Activated CD8-positive, alpha-beta T cell treated with anti-CD3 and anti-CD28 coated beads for 36 hours (primary cell): ENCODE measurements at regions of chr12 and their contacts with region 1.

Region 1: GRCh38 chr12:104108755-104109445 is 29.1 kb downstream of the NFYB start:
- DNase-seq: peak; percentile 98
- ATAC-seq: peak; percentile 97
- H3K4me3 Mint-ChIP-seq: peak overlapping the region; percentile 6
- H3K27ac Mint-ChIP-seq: peak overlapping the region; percentile 18
- H3K4me1 Mint-ChIP-seq: peaks cover 11% of the 10 kb centered on the region
- H3K27me3 Mint-ChIP-seq: no peaks in the 10 kb centered on the region
- CTCF ChIP-seq: peak; percentile 82

Region 2: DNA sequence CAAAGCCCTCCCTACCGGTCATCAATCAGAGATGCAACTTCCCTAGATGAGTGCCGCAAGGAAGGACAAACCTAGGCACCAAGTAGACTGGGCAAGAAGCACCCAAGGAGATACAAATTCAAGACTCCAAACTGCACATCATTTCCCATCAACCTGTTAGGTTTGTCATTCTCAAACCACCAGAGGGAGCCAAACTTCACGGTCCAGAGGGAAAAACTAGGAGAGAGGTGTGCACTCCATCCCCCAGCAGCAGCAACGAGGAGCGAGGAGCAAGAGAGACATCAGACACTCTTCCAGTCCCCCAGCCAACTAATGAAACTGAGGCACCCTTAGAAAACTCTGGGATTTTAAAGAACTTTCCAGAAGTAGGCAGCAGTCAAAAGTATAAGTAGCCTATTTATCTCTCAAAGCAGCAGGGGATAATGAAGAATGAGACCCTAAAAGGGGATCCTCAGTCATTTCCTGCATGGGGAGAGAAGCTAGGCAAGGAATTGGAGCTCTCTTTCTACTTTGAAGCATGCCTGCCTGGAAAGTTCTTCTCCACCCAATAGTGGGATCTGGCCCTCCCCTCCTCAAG is 230.9 kb before region 1 on chr12:
- CTCF ChIA-PET with region 1: interaction called, 37 read pairs
- POLR2A ChIA-PET with region 1: no interaction called
- intact Hi-C with region 1: loop called (anchors 2 kb)
- DNase-seq: peak; percentile 71
- ATAC-seq: peak; percentile 57
- H3K4me3 Mint-ChIP-seq: no peak overlapping the region
- H3K27ac Mint-ChIP-seq: no peak overlapping the region
- H3K4me1 Mint-ChIP-seq: peaks cover 26% of the 10 kb centered on the region
- H3K27me3 Mint-ChIP-seq: no peaks in the 10 kb centered on the region
- CTCF ChIP-seq: peak; percentile 79

Region 3: GRCh38 chr12:103956516-103957027 is 152.3 kb before region 1 on chr12:
- CTCF ChIA-PET with region 1: interaction called, 10 read pairs
- POLR2A ChIA-PET with region 1: no interaction called
- intact Hi-C with region 1: no loop called
- DNase-seq: peak; percentile 27
- ATAC-seq: no peak
- H3K4me3 Mint-ChIP-seq: peak overlapping the region; percentile 93
- H3K27ac Mint-ChIP-seq: peak overlapping the region; percentile 95
- H3K4me1 Mint-ChIP-seq: peaks cover 41% of the 10 kb centered on the region
- H3K27me3 Mint-ChIP-seq: no peaks in the 10 kb centered on the region
- CTCF ChIP-seq: no peak

Region 4: GRCh38 chr12:104046306-104046705 is 62.6 kb before region 1 on chr12:
- CTCF ChIA-PET with region 1: interaction called, 10 read pairs
- POLR2A ChIA-PET with region 1: no interaction called
- intact Hi-C with region 1: no loop called
- DNase-seq: no peak
- ATAC-seq: no peak
- H3K4me3 Mint-ChIP-seq: no peak overlapping the region
- H3K27ac Mint-ChIP-seq: no peak overlapping the region
- H3K4me1 Mint-ChIP-seq: peaks cover 7% of the 10 kb centered on the region
- H3K27me3 Mint-ChIP-seq: peaks cover 15% of the 10 kb centered on the region
- CTCF ChIP-seq: no peak

Region 5: DNA sequence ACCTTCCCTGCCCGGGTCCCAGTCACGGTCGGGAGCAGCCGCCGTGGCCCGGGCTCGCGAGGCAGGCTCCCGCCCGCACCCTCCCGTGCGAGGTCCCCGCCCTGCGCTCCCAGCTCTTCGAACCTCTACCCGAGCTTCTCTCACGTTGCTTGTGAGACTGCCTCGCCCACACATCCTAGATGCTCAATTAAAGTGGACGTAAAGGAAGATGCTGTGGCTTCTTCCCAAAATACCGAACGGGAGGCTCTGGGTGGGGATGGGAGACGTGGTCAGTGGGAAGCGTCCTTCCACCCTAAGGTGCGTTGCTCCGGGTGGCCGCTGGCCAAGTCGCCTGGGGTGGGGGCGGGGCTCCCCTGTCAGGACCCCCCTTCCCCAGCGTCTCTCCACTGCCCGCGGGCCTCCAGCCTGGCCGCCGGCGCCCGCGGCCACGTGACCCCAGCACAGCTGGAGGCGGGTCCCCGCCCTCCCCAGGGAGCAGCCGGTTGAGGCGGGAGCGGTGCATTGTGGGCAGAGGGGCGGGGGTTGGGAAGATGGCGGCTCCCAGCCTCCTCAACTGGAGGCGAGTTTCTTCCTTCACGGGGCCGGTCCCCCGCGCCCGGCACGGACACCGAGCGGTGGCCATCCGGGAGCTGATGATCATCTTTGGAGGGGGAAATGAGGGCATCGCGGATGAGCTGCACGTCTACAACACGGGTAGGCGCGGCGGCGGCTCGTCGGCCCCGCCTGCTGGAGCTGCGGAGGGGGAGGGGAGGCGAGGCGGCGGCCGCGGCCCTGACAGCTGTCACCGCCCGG is 44.7 kb before region 1 on chr12 and contains the start of gene HCFC2:
- CTCF ChIA-PET with region 1: interaction called, 105 read pairs
- POLR2A ChIA-PET with region 1: no interaction called
- intact Hi-C with region 1: no loop called
- DNase-seq: peak; percentile 91
- ATAC-seq: peak; percentile 96
- H3K4me3 Mint-ChIP-seq: peak within 1 kb of the TSS; percentile 93
- H3K27ac Mint-ChIP-seq: peak within 1 kb of the TSS; percentile 92
- H3K4me1 Mint-ChIP-seq: peaks cover 16% of the 10 kb centered on the region
- H3K27me3 Mint-ChIP-seq: peaks cover 7% of the 10 kb centered on the region
- CTCF ChIP-seq: no peak
- total RNA-seq, gene HCFC2: 8.3 to 8.6 TPM

Region 6: GRCh38 chr12:104090687-104091086 is 18.2 kb before region 1 on chr12:
- CTCF ChIA-PET with region 1: interaction called, 21 read pairs
- POLR2A ChIA-PET with region 1: no interaction called
- intact Hi-C with region 1: no loop called
- DNase-seq: no peak
- ATAC-seq: no peak
- H3K4me3 Mint-ChIP-seq: no peak overlapping the region
- H3K27ac Mint-ChIP-seq: no peak overlapping the region
- H3K4me1 Mint-ChIP-seq: peaks cover 2% of the 10 kb centered on the region
- H3K27me3 Mint-ChIP-seq: no peaks in the 10 kb centered on the region
- CTCF ChIP-seq: no peak

Region 7: GRCh38 chr12:104121001-104121400 is 12.1 kb after region 1 on chr12:
- CTCF ChIA-PET with region 1: interaction called, 24 read pairs
- POLR2A ChIA-PET with region 1: no interaction called
- intact Hi-C with region 1: no loop called
- DNase-seq: no peak
- ATAC-seq: no peak
- H3K4me3 Mint-ChIP-seq: no peak overlapping the region
- H3K27ac Mint-ChIP-seq: no peak overlapping the region
- H3K4me1 Mint-ChIP-seq: peaks cover 2% of the 10 kb centered on the region
- H3K27me3 Mint-ChIP-seq: no peaks in the 10 kb centered on the region
- CTCF ChIP-seq: no peak